Prostate gland (tissue), 2 donors: ENCODE measurements at regions of chr15 and their contacts with region 1.

Region 1: DNA sequence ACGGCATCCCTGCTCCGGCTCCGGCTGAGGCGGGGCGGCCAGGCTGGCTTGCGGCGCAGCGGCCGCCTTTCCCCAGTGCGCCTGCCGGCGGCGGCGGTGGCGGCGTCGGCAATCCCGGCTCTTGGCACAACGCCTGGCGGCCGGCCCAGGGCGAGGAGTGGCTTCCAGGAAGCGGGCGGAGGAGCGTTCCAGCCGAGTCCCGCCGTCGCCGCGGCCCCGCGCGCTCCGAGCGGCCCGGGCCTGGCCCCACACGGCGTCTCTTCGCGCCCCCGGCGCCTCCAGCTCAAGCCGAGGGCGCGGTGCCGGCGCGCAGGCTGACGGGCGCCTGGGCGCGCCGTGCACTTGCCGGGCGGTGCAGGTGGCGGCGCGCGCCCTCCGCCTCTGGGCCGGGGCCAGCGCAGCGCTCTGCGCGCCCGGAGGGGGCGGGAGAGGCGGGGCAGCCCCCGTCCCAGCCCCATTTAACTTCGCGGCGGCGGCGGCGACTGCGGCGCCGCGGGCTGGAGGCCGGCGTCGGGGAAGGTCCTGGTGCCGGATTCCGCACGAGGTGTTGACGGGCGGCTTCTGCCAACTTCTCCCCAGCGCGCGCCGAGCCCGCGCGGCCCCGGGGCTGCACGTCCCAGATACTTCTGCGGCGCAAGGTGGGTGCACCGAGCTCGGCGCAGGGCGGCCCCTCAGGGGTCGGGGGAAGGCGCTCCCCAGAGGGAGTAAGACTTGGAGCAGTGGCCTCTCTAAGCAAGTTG is at the start of gene ADAMTSL3:
- DNase-seq: peak; percentile 76
- H3K4me3 ChIP-seq: peak within 1 kb of the TSS; percentile 28 to 36
- H3K27ac ChIP-seq: peak within 1 kb of the TSS; percentile 31 to 33
- H3K4me1 ChIP-seq: no peaks in the 10 kb centered on the region
- H3K27me3 ChIP-seq: no peaks in the 10 kb centered on the region
- CTCF ChIP-seq: peak in 1 of 4 experiments; percentile 35
- POLR2A ChIP-seq: no peak
- total RNA-seq, gene ADAMTSL3: 4.5 to 25.2 TPM

Region 2: GRCh38 chr15:83571820-83572707 is 81.7 kb before region 1 on chr15:
- intact Hi-C with region 1: loop called (anchors 5 kb)
- DNase-seq: no peak
- H3K4me3 ChIP-seq: no peak overlapping the region
- H3K27ac ChIP-seq: no peak overlapping the region
- H3K4me1 ChIP-seq: no peaks in the 10 kb centered on the region
- H3K27me3 ChIP-seq: no peaks in the 10 kb centered on the region
- CTCF ChIP-seq: peak in 3 of 4 experiments; percentile 28 to 50 (median 41)
- POLR2A ChIP-seq: no peak

Region 3: DNA sequence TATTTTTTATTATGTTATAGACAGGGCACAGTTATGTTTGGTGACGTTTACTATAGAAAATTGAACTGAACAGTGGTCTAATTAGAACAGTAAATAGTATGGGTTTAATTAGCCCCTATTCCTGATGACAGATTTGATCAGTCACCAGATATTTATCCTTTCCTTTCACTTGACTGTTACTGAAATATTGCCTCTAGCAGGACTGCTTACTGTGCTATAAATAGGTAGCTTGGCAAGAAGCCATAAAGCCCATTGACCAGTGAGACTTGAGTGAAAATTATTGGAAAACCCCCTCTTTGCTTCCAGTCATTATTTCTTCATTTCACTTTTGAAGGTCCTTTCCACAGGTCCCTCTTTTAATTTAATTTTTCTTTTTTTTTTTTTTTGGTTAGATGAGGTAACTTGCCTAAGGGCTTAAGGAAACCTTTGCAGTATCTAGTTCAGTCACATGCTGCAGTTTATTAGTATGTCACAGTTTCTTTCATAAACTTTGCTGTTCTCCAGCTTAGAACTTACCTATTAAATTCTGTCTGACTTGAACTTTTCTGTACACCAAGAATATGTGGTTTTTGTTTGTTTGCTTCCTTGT is 115.7 kb after region 1 on chr15:
- intact Hi-C with region 1: no loop called
- DNase-seq: no peak
- H3K4me3 ChIP-seq: no peak overlapping the region
- H3K27ac ChIP-seq: no peak overlapping the region
- H3K4me1 ChIP-seq: no peaks in the 10 kb centered on the region
- H3K27me3 ChIP-seq: no peaks in the 10 kb centered on the region
- CTCF ChIP-seq: no peak
- POLR2A ChIP-seq: no peak

Region 4: GRCh38 chr15:83794209-83794608 is 140.4 kb after region 1 on chr15:
- intact Hi-C with region 1: no loop called
- DNase-seq: no peak
- H3K4me3 ChIP-seq: no peak overlapping the region
- H3K27ac ChIP-seq: no peak overlapping the region
- H3K4me1 ChIP-seq: no peaks in the 10 kb centered on the region
- H3K27me3 ChIP-seq: no peaks in the 10 kb centered on the region
- CTCF ChIP-seq: no peak
- POLR2A ChIP-seq: no peak

Region 5: DNA sequence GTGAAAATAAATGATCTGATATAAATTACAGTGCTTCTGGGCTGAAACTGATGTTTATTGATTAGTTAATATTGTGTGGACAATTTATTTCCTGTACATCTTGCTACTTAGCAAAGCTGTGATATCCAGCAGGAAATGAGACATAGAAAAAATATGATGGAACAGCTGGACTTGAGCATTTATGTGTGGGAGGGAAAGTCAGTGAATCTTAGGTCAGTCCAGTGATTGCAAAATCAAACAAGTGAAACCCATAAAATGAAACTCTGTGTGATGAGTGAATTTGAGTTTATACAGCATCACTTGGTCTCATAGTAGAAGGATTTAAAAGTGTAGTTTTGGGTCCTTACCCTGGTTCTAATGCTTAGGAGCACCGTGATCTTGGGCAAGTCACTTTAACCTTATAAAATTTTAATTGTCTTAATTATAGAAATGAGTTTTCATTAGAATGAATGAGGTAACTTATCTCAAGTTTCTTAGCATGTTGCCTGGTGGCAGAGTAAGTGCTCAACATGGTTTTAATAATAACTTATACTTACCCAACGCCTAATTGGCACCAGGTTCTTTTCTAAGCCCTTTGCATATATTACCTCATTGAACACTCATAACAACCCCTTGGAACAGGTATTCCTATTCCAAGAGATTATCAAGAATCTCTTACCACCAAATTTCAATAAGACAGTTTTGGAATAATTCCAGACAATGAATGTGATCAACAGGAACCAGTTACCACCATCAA is 194.7 kb after region 1 on chr15:
- intact Hi-C with region 1: loop called (anchors 10 kb)
- DNase-seq: no peak
- H3K4me3 ChIP-seq: no peak overlapping the region
- H3K27ac ChIP-seq: no peak overlapping the region
- H3K4me1 ChIP-seq: no peaks in the 10 kb centered on the region
- H3K27me3 ChIP-seq: no peaks in the 10 kb centered on the region
- CTCF ChIP-seq: no peak
- POLR2A ChIP-seq: no peak